ENCODE measurements at regions of chr10 and their contacts with region 1.

Region 1: GRCh38 chr10:26881600-26882331 is 21.0 kb upstream of the ABI1 start:
- DNase-seq: peak; percentile 23 to 61 (median 31)
- ATAC-seq: peak; percentile 92
- H3K4me3 ChIP-seq: no peak overlapping the region
- H3K27ac ChIP-seq: no peak overlapping the region
- H3K4me1 ChIP-seq: no peaks in the 10 kb centered on the region; a peak in 1 of 5 replicates
- H3K27me3 ChIP-seq: peaks cover 3 to 27% of the 10 kb centered on the region in 2 experiments; a peak in 3 of 5 replicates
- CTCF ChIP-seq: peak; percentile 74 to 91 (median 76)
- EP300 ChIP-seq: no peak
- POLR2A ChIP-seq: no peak
- RAD21 ChIP-seq: peak; percentile 86 to 94

Region 2: DNA sequence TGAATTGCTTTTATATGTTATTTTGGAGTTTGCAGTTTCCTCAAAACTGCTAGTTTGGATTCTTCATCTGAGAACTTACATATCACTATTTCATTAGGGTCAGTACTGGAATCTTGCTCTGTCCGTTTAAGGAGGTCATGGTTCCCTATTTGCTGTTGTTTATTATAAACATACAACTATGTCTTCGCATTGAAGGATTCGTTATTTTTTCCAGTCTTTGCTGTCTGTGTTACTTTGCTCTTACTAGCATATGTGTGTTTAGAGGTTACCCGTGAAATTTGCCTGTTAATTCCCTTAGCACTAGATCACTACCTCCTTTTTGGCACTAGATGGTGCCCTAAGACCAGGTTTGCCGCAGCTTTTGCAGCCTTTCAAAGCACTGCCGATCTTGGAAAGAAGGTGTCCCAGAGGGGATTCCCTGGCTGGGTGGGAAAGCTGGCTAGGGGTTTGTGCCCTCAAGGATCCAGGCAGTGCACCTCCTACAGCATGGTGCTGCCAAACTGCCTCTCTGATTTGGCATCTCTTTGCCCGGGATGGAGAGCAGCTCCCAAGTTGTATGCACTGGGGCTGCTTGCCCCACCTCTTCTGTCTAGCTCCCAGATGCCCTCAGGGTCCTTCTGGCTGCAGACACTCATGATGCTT is 546.7 kb before region 1 on chr10:
- CTCF ChIA-PET with region 1: interaction called, 3 read pairs
- POLR2A ChIA-PET with region 1: no interaction called
- in situ Hi-C with region 1: no loop called
- intact Hi-C with region 1: loop called (anchors 1 kb)
- DNase-seq: peak; percentile 42 to 64 (median 48)
- ATAC-seq: peak; percentile 78
- H3K4me3 ChIP-seq: no peak overlapping the region
- H3K27ac ChIP-seq: no peak overlapping the region
- H3K4me1 ChIP-seq: no peaks in the 10 kb centered on the region
- H3K27me3 ChIP-seq: no peaks in the 10 kb centered on the region
- CTCF ChIP-seq: peak; percentile 48 to 75 (median 70)
- EP300 ChIP-seq: no peak
- POLR2A ChIP-seq: no peak
- RAD21 ChIP-seq: peak; percentile 49 to 87; a peak in 3 of 4 replicates

Region 3: GRCh38 chr10:26612151-26612915 is 269.4 kb before region 1 on chr10:
- CTCF ChIA-PET with region 1: no interaction called
- POLR2A ChIA-PET with region 1: interaction called, 4 read pairs
- in situ Hi-C with region 1: no loop called
- intact Hi-C with region 1: loop called (anchors 2 kb)
- DNase-seq: no peak
- ATAC-seq: no peak
- H3K4me3 ChIP-seq: no peak overlapping the region
- H3K27ac ChIP-seq: no peak overlapping the region
- H3K4me1 ChIP-seq: no peaks in the 10 kb centered on the region
- H3K27me3 ChIP-seq: peaks cover 4 to 11% of the 10 kb centered on the region in 2 experiments; a peak in 3 of 5 replicates
- CTCF ChIP-seq: no peak
- EP300 ChIP-seq: no peak
- POLR2A ChIP-seq: no peak
- RAD21 ChIP-seq: no peak

Region 4: GRCh38 chr10:26860443-26861204 is 21.1 kb before region 1 on chr10 and contains the start of gene ABI1:
- CTCF ChIA-PET with region 1: interaction called, 11 read pairs
- POLR2A ChIA-PET with region 1: interaction called, 4 read pairs
- in situ Hi-C with region 1: no loop called
- intact Hi-C with region 1: no loop called
- DNase-seq: peak; percentile 96 to 98 (median 97)
- ATAC-seq: peak; percentile 92
- H3K4me3 ChIP-seq: peak within 1 kb of the TSS; percentile 100
- H3K27ac ChIP-seq: peak within 1 kb of the TSS; percentile 94
- H3K4me1 ChIP-seq: peaks cover 3 to 14% of the 10 kb centered on the region in 2 experiments; a peak in 4 of 5 replicates
- H3K27me3 ChIP-seq: 0 out of 5 replicates have a peak, but pooled peaks cover 4 to 5% of the 10 kb centered on the region in 2 experiments
- CTCF ChIP-seq: no peak
- EP300 ChIP-seq: peak; percentile 9; the same call in 1 of the 2 replicates
- POLR2A ChIP-seq: peak; percentile 94
- RAD21 ChIP-seq: no peak
- polyA plus RNA-seq, gene ABI1: 39.0 to 52.3 TPM

Measured in K562 (cell line).